A673 (cell line): ENCODE measurements at regions of chr11 and their contacts with region 1.

Region 1: DNA sequence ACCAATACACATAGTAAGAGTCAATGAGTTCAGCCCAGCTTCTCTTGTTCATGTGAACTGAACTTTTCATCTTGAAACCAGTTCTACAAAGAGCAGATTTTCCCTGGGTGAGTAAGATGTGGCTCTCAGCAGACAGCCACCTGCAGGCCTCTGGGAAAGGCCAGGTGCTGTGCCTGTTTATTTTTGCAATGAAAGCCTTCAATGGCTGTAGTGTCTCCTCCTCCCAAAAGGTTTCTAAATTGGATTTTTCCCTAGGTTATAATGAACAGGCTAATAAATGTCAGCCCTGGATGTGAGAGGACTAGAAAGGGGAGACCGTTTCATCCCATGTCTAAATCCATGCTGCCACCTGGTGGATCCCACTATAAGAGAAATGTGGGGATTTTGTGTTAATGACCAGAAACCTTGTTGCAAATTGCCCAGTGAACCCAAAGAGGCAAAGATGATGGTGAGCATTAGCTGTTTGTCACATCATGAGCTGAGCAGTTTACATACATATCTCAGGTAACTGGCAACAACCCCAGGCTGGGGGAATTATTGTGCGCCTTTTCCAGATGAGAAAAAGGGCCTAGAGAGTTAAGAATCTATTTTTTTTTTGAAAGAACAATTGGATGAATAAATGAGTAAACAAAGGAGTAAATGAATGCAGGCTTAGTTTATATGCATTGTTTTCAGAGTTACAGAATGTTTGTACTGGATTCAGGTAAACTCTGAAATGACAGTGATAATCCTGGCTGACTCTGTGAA is 12.7 kb downstream of the C11orf91 start:
- DNase-seq: peak; percentile 91
- H3K4me3 ChIP-seq: no peak overlapping the region
- H3K27ac ChIP-seq: no peak overlapping the region
- H3K4me1 ChIP-seq: peaks cover 23% of the 10 kb centered on the region
- H3K27me3 ChIP-seq: no peaks in the 10 kb centered on the region
- CTCF ChIP-seq: peak; percentile 99

Region 2: GRCh38 chr11:32751381-32751780 is 936.5 kb before region 1 on chr11:
- CTCF ChIA-PET with region 1: interaction called, 5 read pairs
- POLR2A ChIA-PET with region 1: no interaction called
- intact Hi-C with region 1: loop called (anchors 10 kb)
- DNase-seq: no peak
- H3K4me3 ChIP-seq: no peak overlapping the region
- H3K27ac ChIP-seq: no peak overlapping the region
- H3K4me1 ChIP-seq: no peaks in the 10 kb centered on the region
- H3K27me3 ChIP-seq: peaks cover 8% of the 10 kb centered on the region
- CTCF ChIP-seq: no peak

Region 3: DNA sequence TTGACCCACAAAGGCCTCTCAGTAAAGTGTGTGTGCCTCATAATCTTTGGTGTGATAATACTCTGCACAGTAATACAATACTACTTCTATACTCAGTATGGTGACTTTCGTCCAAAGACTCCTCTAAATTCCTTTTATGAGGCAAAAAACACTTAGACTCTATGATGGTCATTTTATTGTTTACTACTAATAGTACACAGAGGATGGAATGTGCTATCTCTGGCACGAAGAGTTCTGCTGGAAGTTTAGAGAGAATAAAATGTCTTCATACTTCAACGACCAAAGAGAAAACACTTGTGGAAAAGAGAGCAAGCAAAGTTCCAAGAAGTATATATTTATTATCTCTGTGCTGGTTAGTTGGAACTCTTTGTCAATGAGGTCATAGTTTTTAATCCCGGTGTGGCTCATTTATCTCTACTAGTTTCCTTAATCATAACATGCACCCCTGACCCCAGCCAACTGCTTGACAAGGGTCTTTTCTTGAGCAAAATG is 519.2 kb before region 1 on chr11:
- CTCF ChIA-PET with region 1: interaction called, 3 read pairs
- POLR2A ChIA-PET with region 1: no interaction called
- intact Hi-C with region 1: loop called (anchors 5 kb)
- DNase-seq: no peak
- H3K4me3 ChIP-seq: no peak overlapping the region
- H3K27ac ChIP-seq: no peak overlapping the region
- H3K4me1 ChIP-seq: no peaks in the 10 kb centered on the region
- H3K27me3 ChIP-seq: no peaks in the 10 kb centered on the region
- CTCF ChIP-seq: no peak

Region 4: DNA sequence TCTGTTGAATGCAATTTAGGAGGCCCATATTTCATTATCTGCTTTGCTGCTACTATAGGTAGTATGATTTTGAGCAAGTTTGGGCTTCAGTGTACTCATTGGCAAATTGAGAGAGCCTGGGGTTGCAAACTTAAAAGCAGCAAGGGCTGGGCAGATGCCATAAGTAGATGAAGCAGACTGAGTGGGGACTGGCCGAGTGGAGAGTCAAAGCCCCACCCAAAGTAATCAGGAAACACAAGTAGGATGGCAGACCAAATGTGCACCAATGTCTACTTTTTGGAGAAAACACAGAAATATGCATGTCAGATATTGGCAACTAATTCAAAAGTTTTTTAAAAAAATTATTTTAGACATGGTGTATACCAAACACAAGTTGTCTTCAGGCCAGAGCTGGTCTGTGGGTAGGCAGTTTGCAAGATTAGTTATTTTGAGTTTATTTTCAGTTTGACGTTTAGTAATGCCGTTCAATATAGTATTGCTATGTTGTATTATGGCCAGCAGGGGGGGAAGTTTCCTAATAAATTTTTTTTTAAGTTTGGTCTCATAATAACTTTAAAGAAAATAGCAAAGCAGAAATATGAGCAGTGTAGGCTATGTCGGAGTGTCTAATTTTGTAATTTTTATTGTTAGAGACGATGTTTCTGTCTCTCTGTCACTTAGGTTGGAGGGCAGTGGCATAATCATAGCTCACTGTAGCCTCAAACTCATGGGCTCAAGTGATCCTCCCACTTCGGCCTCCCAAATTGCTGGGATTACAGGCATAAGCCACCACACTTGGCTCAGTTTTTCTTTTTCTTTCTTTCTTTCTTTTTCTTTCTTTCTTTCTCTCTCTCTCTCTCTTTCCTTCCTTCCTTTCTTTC is 325.6 kb before region 1 on chr11:
- CTCF ChIA-PET with region 1: interaction called, 7 read pairs
- POLR2A ChIA-PET with region 1: interaction called, 3 read pairs
- intact Hi-C with region 1: loop called (anchors 1 kb)
- DNase-seq: peak; percentile 86
- H3K4me3 ChIP-seq: no peak overlapping the region
- H3K27ac ChIP-seq: no peak overlapping the region
- H3K4me1 ChIP-seq: no peaks in the 10 kb centered on the region
- H3K27me3 ChIP-seq: no peaks in the 10 kb centered on the region
- CTCF ChIP-seq: peak; percentile 97

Region 5: DNA sequence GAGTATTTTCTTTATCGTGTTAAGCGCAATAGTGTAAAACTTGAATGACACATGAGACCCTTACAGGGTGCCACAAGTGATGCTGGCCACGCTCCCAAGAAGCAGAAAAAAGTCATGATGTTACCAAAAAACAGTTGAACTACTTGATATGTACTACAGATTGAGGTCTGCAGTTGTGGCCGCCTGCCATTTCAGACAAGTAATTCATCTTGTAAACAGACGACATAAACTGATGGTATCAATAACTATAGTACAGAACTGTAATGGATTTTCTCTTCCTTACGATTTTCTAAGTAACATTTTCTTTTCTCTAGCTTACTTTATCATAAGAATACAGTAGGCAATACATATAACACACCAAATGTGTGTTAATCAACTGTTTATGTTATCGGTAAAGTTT is 42.8 kb after region 1 on chr11:
- CTCF ChIA-PET with region 1: no interaction called
- POLR2A ChIA-PET with region 1: no interaction called
- intact Hi-C with region 1: no loop called
- DNase-seq: no peak
- H3K4me3 ChIP-seq: no peak overlapping the region
- H3K27ac ChIP-seq: no peak overlapping the region
- H3K4me1 ChIP-seq: peaks cover 13% of the 10 kb centered on the region
- H3K27me3 ChIP-seq: no peaks in the 10 kb centered on the region
- CTCF ChIP-seq: no peak

Region 6: DNA sequence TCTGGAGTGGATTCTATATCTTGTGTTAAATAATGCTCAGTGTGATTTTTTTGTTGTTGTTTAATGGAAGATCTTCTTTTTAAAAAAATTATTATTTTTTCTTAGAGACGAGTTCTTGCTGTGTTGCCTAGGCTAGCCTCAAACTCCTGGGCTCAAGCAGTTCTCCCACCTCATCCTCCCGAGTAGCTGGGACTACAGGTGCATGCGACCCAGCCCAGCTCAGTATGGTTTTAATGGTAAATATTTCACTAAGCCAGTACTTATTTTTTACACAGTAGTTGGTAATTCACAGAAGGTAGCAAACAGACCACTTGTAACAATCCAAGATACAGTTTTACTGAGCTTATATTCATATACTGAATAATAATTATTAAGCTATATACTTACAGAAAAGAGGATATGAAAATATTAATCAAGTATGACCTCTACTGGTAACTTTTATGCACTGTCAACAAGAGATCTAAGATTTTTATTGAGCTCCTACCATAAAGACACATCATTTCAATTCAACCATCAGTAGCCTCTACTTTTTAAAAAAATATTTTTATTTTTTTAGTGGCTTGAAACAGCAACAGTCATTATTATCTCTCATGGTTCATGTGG is 54.4 kb after region 1 on chr11:
- CTCF ChIA-PET with region 1: interaction called, 19 read pairs
- POLR2A ChIA-PET with region 1: no interaction called
- intact Hi-C with region 1: no loop called
- DNase-seq: peak; percentile 62
- H3K4me3 ChIP-seq: no peak overlapping the region
- H3K27ac ChIP-seq: no peak overlapping the region
- H3K4me1 ChIP-seq: no peaks in the 10 kb centered on the region
- H3K27me3 ChIP-seq: no peaks in the 10 kb centered on the region
- CTCF ChIP-seq: peak; percentile 87